ENCODE measurements at regions of chr17 and their contacts with region 1.

Region 1: GRCh38 chr17:43694077-43694870 is 32.6 kb upstream of the MEOX1 start:
- DNase-seq: peak; percentile 60
- H3K4me3 Mint-ChIP-seq: no peak overlapping the region
- H3K27ac Mint-ChIP-seq: no peak overlapping the region
- H3K4me1 Mint-ChIP-seq: peaks cover 5% of the 10 kb centered on the region
- H3K27me3 Mint-ChIP-seq: no peaks in the 10 kb centered on the region

Region 2: DNA sequence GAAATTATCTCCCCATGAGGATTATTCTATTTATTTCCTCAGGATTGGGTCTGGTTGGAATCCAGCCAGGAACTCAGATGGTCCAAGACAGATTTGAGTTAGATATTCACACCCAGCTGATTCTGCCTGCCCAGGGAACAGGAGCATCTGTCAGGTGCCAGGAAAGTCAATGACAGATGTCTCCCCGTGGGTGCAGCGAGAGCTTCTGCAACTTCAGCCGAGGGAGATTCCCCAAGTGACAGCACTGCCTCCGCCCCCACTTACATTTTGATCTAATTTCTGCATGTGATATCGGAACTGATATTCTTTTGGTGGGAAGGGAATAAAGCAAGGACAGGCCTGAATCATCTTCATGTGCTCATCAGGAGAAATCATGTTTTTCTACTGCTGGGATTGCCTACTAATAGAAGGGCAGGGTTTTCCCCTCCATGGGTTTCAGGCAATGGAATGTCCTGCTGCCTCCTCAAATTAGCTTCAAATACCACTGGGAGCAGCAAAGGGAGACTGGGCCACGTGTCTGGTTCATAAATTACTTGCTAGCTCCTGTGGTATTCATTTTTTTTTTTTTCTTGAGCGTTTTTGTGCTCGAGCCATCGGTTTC is 226.2 kb before region 1 on chr17:
- intact Hi-C with region 1: no loop called
- DNase-seq: no peak
- H3K4me3 Mint-ChIP-seq: no peak overlapping the region
- H3K27ac Mint-ChIP-seq: no peak overlapping the region
- H3K4me1 Mint-ChIP-seq: no peaks in the 10 kb centered on the region
- H3K27me3 Mint-ChIP-seq: peaks cover 3% of the 10 kb centered on the region

Region 3: DNA sequence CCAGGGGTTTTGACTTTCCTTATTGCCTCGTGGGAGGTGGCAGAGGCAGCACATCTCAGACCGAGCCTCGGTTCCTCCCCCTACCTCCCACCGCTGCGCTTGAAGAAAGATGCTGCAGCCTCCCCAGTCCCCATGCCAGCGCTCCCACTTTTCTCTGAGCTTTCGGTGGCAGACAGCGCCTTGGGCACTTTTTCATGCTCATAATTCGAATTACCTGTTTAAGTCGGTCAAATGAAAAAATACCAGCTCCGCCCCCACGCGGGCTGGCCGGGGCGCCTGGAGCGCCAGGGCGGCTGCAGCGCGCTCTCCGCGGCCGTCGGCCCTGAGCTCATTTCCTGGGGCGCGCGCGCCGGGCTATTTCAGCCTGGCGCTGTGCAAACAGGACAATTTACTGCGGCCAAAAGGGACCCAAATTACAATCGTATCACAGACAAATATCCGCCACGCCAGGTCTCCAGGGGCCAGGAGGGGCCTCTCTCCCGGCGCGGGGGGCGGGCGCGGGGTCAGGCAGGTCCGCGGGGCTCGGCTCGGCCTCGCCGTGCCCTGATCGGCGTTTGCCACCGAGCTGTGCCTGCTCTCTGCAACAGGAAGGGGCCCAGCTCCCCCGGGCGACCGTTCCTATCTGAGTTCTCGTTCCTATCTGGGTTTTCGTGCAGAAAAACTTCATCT is 19.4 kb after region 1 on chr17:
- intact Hi-C with region 1: no loop called
- DNase-seq: peak; percentile 9
- H3K4me3 Mint-ChIP-seq: peak overlapping the region; percentile 76
- H3K27ac Mint-ChIP-seq: no peak overlapping the region
- H3K4me1 Mint-ChIP-seq: peaks cover 18% of the 10 kb centered on the region
- H3K27me3 Mint-ChIP-seq: peaks cover 38% of the 10 kb centered on the region

Region 4: GRCh38 chr17:43760254-43760852 is 66.1 kb after region 1 on chr17:
- intact Hi-C with region 1: loop called (anchors 1 kb)
- DNase-seq: peak; percentile 79
- H3K4me3 Mint-ChIP-seq: no peak overlapping the region
- H3K27ac Mint-ChIP-seq: no peak overlapping the region
- H3K4me1 Mint-ChIP-seq: no peaks in the 10 kb centered on the region
- H3K27me3 Mint-ChIP-seq: peaks cover 19% of the 10 kb centered on the region

Region 5: GRCh38 chr17:43766413-43767052 is 72.3 kb after region 1 on chr17:
- intact Hi-C with region 1: loop called (anchors 1 kb)
- DNase-seq: no peak
- H3K4me3 Mint-ChIP-seq: no peak overlapping the region
- H3K27ac Mint-ChIP-seq: no peak overlapping the region
- H3K4me1 Mint-ChIP-seq: no peaks in the 10 kb centered on the region
- H3K27me3 Mint-ChIP-seq: no peaks in the 10 kb centered on the region

Region 6: DNA sequence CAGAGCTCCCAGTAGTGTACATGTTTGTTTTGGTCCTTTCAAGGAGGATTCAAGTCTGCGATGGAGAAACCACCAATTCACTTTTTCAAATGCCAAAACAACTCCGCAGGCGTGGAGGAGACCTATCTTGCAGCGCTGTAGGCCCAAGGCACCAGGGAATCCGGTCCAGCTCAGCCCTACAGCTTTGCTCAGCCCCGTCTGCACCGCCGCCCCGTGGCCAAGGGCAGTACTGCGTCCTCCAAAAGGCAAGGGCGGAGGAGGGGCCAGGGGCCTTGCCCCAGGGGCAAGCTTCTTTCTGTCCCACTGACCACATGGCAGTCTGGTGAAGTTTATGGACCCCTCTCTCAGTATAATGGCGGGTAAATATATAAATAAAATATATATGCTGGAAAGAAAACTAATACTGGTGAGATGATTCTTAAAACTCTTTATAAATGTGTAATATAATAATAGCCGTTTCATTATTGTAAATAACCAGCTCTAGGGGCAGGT is 152.0 kb after region 1 on chr17:
- intact Hi-C with region 1: loop called (anchors 1 kb)
- DNase-seq: peak; percentile 67
- H3K4me3 Mint-ChIP-seq: no peak overlapping the region
- H3K27ac Mint-ChIP-seq: no peak overlapping the region
- H3K4me1 Mint-ChIP-seq: no peaks in the 10 kb centered on the region
- H3K27me3 Mint-ChIP-seq: peaks cover 12% of the 10 kb centered on the region

Measured in activated T-helper 1 cell treated with anti-CD3 and anti-CD28 coated beads, Interleukin-12 subunit alpha, Interleukin-12 subunit beta, Interleukin-2, Interleukin-4 antibody, amounts not matched to agents 30 ng/mL and 10 ng/mL and 1 ng/mL, durations not matched to agents 14 hours and 24 hours and 36 hours (primary cell).